HCT116 (cell line): ENCODE measurements at regions of chr19 and their contacts with region 1.

Region 1: GRCh38 chr19:10936661-10937084 is 8.1 kb downstream of the TIMM29 start:
- DNase-seq: peak; percentile 74
- ATAC-seq: peak; percentile 67
- H3K4me3 ChIP-seq: no peak overlapping the region
- H3K27ac ChIP-seq: no peak overlapping the region
- H3K4me1 ChIP-seq: peaks cover 18 to 40% of the 10 kb centered on the region in 2 experiments
- H3K27me3 ChIP-seq: no peaks in the 10 kb centered on the region
- CTCF ChIP-seq: peak; percentile 46 to 71 (median 53); a peak in 4 of 6 replicates
- POLR2A ChIP-seq: no peak
- RAD21 ChIP-seq: peak; percentile 85

Region 2: GRCh38 chr19:10946964-10947657 is 10.4 kb after region 1 on chr19:
- CTCF ChIA-PET with region 1: interaction called, 18 read pairs
- POLR2A ChIA-PET with region 1: interaction called, 5 read pairs
- RAD21 ChIA-PET with region 1: no interaction called
- intact Hi-C with region 1: no loop called
- DNase-seq: no peak
- ATAC-seq: no peak
- H3K4me3 ChIP-seq: no peak overlapping the region
- H3K27ac ChIP-seq: no peak overlapping the region
- H3K4me1 ChIP-seq: peaks cover 3 to 26% of the 10 kb centered on the region in 2 experiments
- H3K27me3 ChIP-seq: no peaks in the 10 kb centered on the region
- CTCF ChIP-seq: no peak
- POLR2A ChIP-seq: no peak
- RAD21 ChIP-seq: no peak

Region 3: GRCh38 chr19:10960314-10961072 is 23.8 kb after region 1 on chr19 and contains the start of gene SMARCA4:
- CTCF ChIA-PET with region 1: interaction called, 18 read pairs
- POLR2A ChIA-PET with region 1: interaction called, 7 read pairs
- RAD21 ChIA-PET with region 1: no interaction called
- intact Hi-C with region 1: no loop called
- DNase-seq: peak; percentile 90
- ATAC-seq: peak; percentile 87
- H3K4me3 ChIP-seq: peak within 1 kb of the TSS; percentile 75 to 83
- H3K27ac ChIP-seq: peak within 1 kb of the TSS; percentile 74
- H3K4me1 ChIP-seq: peaks cover 14 to 38% of the 10 kb centered on the region in 2 experiments; a peak in 3 of 4 replicates
- H3K27me3 ChIP-seq: no peaks in the 10 kb centered on the region
- CTCF ChIP-seq: no peak
- POLR2A ChIP-seq: peak; percentile 88
- RAD21 ChIP-seq: no peak
- total RNA-seq, gene SMARCA4: 116 TPM

Region 4: GRCh38 chr19:11035441-11036377 is 99.0 kb after region 1 on chr19:
- CTCF ChIA-PET with region 1: interaction called, 9 read pairs
- POLR2A ChIA-PET with region 1: no interaction called
- RAD21 ChIA-PET with region 1: interaction called in 1 of 2 experiments, 3 read pairs
- intact Hi-C with region 1: loop called (anchors 5 kb)
- DNase-seq: peak; percentile 73
- ATAC-seq: peak; percentile 99
- H3K4me3 ChIP-seq: no peak overlapping the region
- H3K27ac ChIP-seq: peak overlapping the region; percentile 31; the same call in 1 of the 2 replicates
- H3K4me1 ChIP-seq: peaks cover 0 to 8% of the 10 kb centered on the region in 2 experiments; a peak in 1 of 4 replicates
- H3K27me3 ChIP-seq: no peaks in the 10 kb centered on the region
- CTCF ChIP-seq: peak; percentile 88 to 93 (median 89)
- POLR2A ChIP-seq: no peak
- RAD21 ChIP-seq: peak; percentile 95

Region 5: GRCh38 chr19:11096210-11096841 is 159.7 kb after region 1 on chr19:
- CTCF ChIA-PET with region 1: interaction called, 4 read pairs
- POLR2A ChIA-PET with region 1: interaction called, 3 read pairs
- RAD21 ChIA-PET with region 1: interaction called in 1 of 2 experiments, 4 read pairs
- intact Hi-C with region 1: loop called (anchors 5 kb)
- DNase-seq: no peak
- ATAC-seq: no peak
- H3K4me3 ChIP-seq: no peak overlapping the region
- H3K27ac ChIP-seq: peak overlapping the region; percentile 91
- H3K4me1 ChIP-seq: peaks cover 51 to 63% of the 10 kb centered on the region in 2 experiments
- H3K27me3 ChIP-seq: no peaks in the 10 kb centered on the region
- CTCF ChIP-seq: no peak
- POLR2A ChIP-seq: no peak
- RAD21 ChIP-seq: no peak

Region 6: GRCh38 chr19:11125994-11126685 is 189.5 kb after region 1 on chr19:
- CTCF ChIA-PET with region 1: interaction called, 10 read pairs
- POLR2A ChIA-PET with region 1: no interaction called
- RAD21 ChIA-PET with region 1: no interaction called
- intact Hi-C with region 1: loop called (anchors 5 kb)
- DNase-seq: peak; percentile 39
- ATAC-seq: peak; percentile 75
- H3K4me3 ChIP-seq: no peak overlapping the region
- H3K27ac ChIP-seq: no peak overlapping the region
- H3K4me1 ChIP-seq: peaks cover 0 to 3% of the 10 kb centered on the region in 2 experiments; a peak in 1 of 4 replicates
- H3K27me3 ChIP-seq: no peaks in the 10 kb centered on the region
- CTCF ChIP-seq: peak; percentile 64 to 78 (median 77); a peak in 5 of 6 replicates
- POLR2A ChIP-seq: no peak
- RAD21 ChIP-seq: peak; percentile 56

Region 7: GRCh38 chr19:11203194-11204075 is 266.8 kb after region 1 on chr19:
- CTCF ChIA-PET with region 1: interaction called, 3 read pairs
- POLR2A ChIA-PET with region 1: no interaction called
- RAD21 ChIA-PET with region 1: no interaction called
- intact Hi-C with region 1: loop called (anchors 5 kb)
- DNase-seq: no peak
- ATAC-seq: peak; percentile 88
- H3K4me3 ChIP-seq: no peak overlapping the region
- H3K27ac ChIP-seq: no peak overlapping the region; the same call in 1 of the 2 replicates
- H3K4me1 ChIP-seq: peaks cover 13 to 20% of the 10 kb centered on the region in 2 experiments; a peak in 3 of 4 replicates
- H3K27me3 ChIP-seq: no peaks in the 10 kb centered on the region
- CTCF ChIP-seq: peak; percentile 69 to 83 (median 77); a peak in 5 of 6 replicates
- POLR2A ChIP-seq: no peak
- RAD21 ChIP-seq: peak; percentile 89